Activated CD4-positive, alpha-beta T cell treated with anti-CD3 and anti-CD28 coated beads for 36 hours (primary cell): ENCODE measurements at regions of chr10 and their contacts with region 1.

Region 1: DNA sequence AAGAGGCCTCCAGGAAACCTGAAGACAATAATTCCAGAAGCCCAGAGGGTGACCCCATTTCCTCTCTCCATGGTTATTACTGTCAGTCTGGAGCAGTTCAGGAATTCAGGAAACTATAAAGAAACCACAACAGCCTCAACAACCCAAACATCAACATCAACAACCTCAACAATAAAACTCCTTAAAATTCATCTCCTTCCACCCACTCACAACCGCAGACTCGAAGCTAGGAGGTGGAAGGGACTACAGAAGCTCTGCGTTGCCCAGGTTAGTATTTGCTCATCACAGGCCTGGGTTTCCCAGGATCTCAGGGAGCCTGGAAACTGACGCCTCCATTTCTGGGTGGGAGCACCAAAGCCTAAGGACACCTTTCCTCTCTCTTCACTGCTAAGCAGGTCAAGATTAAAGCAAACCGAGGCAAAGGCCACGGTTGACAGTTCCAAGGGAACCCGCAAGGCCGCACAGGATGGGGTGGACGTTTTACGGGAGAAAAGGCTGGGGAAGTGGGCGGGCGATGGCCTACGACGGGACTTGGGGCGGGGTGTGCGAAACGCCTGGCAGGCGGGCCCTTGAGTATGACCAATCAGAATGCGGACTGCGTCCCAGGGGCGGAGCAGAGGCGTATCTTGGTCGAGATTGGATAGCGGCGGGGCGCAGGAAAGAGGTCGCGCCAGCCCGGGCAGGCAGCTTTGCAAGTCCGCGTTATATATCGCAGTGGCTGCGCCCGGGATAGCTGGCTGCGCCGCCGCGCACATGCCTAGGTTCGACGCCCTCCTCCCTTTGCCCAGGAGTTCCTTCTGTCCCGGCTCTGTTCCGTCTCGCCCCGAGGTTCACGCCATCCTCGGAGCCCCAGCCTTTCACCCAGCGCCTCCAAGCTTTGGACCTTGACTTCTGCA is at the start of gene ELOVL3:
- DNase-seq: peak; percentile 91
- ATAC-seq: peak; percentile 91
- H3K4me3 Mint-ChIP-seq: peak within 1 kb of the TSS; percentile 38
- H3K27ac Mint-ChIP-seq: no peak within 1 kb of the TSS
- H3K4me1 Mint-ChIP-seq: peaks cover 24% of the 10 kb centered on the region
- H3K27me3 Mint-ChIP-seq: peaks cover 39% of the 10 kb centered on the region
- total RNA-seq, gene ELOVL3: 0.14 TPM in 1 of 2 experiments, not detected in the other

Region 2: DNA sequence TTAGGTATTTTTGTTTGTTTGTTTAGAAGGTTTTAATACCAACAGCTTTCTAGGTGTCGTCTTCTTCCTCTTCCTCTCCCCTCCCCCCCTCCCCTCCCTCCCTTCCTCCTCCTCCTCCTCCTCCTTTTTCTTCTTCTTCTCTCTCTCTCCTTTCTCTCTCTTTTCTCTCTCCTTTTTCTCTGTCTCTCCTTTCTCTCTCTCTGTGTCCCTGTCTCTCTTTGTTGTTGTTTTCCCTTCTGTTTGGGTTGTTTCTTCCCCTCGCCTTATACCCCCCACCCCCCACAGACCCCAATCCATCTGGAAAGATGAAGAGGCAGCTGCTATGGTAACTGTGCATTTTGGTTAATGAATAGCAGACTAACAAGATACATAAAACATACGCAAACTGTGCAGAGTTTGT is 796.5 kb before region 1 on chr10:
- CTCF ChIA-PET with region 1: no interaction called
- POLR2A ChIA-PET with region 1: no interaction called
- intact Hi-C with region 1: no loop called
- DNase-seq: no peak
- ATAC-seq: no peak
- H3K4me3 Mint-ChIP-seq: no peak overlapping the region
- H3K27ac Mint-ChIP-seq: no peak overlapping the region
- H3K4me1 Mint-ChIP-seq: peaks cover 4% of the 10 kb centered on the region
- H3K27me3 Mint-ChIP-seq: no peaks in the 10 kb centered on the region

Region 3: GRCh38 chr10:102268375-102268888 is 42.5 kb after region 1 on chr10:
- CTCF ChIA-PET with region 1: interaction called, 82 read pairs
- POLR2A ChIA-PET with region 1: no interaction called
- intact Hi-C with region 1: no loop called
- DNase-seq: no peak
- ATAC-seq: peak; percentile 61
- H3K4me3 Mint-ChIP-seq: peak overlapping the region; percentile 48
- H3K27ac Mint-ChIP-seq: peak overlapping the region; percentile 94
- H3K4me1 Mint-ChIP-seq: peaks cover 57% of the 10 kb centered on the region
- H3K27me3 Mint-ChIP-seq: no peaks in the 10 kb centered on the region

Region 4: GRCh38 chr10:102335184-102335583 is 109.3 kb after region 1 on chr10:
- CTCF ChIA-PET with region 1: interaction called, 12 read pairs
- POLR2A ChIA-PET with region 1: no interaction called
- intact Hi-C with region 1: no loop called
- DNase-seq: no peak
- ATAC-seq: no peak
- H3K4me3 Mint-ChIP-seq: no peak overlapping the region
- H3K27ac Mint-ChIP-seq: no peak overlapping the region
- H3K4me1 Mint-ChIP-seq: peaks cover 19% of the 10 kb centered on the region
- H3K27me3 Mint-ChIP-seq: no peaks in the 10 kb centered on the region

Region 5: DNA sequence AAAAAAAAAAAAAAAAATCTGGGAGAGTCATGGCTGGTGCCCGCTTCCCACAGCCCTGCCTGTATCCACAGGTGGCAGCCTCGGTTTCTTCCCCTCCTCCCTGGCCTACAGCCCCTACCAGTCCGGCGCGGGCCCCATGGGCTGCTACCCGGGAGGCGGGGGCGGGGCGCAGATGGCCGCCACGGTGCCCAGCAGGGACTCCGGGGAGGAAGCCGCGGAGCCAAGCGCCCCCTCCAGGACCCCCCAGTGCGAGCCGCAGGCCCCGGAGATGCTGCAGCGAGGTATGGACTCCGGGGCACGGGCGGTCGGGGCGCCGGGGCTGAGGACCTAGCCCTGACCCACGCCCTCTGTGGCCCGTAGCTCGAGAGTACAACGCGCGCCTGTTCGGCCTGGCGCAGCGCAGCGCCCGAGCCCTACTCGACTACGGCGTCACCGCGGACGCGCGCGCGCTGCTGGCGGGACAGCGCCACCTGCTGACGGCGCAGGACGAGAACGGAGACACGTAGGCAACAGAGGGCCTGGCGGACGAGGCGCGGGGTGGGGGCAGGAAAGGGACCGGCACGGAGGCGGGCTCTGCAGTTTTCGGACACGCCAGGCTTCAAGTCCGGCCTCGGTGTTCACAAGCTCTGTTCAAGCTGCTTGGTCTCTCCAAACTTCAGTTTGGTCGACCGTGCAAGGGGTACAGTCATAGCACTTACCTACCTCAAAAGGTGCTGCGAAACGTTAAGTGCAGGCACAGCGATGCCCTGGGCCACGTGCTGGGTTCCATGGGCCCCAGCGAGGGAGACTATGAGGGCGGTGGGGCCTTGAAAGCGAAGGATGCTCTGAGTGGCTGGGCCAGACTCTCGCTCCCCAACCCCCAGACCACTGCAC is 173.6 kb after region 1 on chr10:
- CTCF ChIA-PET with region 1: interaction called, 39 read pairs
- POLR2A ChIA-PET with region 1: no interaction called
- intact Hi-C with region 1: loop called (anchors 1 to 2 kb)
- DNase-seq: peak; percentile 94
- ATAC-seq: peak; percentile 60
- H3K4me3 Mint-ChIP-seq: peak overlapping the region; percentile 95
- H3K27ac Mint-ChIP-seq: peak overlapping the region; percentile 98
- H3K4me1 Mint-ChIP-seq: peaks cover 41% of the 10 kb centered on the region
- H3K27me3 Mint-ChIP-seq: no peaks in the 10 kb centered on the region

Region 6: DNA sequence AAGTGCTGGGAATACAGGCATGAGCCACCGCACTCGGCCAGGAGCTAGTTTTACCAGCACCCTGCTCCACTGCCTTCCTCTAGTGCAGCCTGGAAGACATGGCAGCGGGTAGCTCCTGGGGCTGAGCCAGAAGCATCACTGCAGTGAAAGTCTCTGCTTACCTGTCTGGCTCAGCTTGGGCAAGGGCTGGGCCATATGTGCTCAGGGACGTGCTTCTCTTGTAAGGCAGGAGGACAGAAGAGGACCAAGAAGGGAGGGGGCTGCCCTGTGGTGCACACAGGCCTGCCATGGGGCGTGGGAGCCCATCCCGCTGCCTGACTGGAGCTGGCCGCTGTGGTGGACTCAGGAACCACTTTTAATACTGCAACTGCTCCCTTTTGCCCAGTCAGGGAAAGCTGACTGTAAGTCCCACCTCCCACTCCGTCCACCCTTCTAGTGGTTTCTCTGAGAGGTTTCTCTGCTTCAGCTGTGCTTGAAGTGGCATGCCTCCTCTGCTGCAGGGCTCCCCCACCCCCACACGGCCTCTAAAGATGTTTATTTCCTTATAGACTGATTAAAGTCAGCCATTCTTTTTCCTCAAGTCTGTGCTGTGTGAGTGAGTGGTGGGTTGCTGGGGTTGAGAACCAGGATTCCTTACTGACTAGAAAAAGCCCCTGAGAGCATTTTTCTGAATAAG is 250.7 kb after region 1 on chr10:
- CTCF ChIA-PET with region 1: interaction called, 17 read pairs
- POLR2A ChIA-PET with region 1: no interaction called
- intact Hi-C with region 1: loop called (anchors 1 to 2 kb)
- DNase-seq: peak; percentile 36
- ATAC-seq: no peak
- H3K4me3 Mint-ChIP-seq: no peak overlapping the region
- H3K27ac Mint-ChIP-seq: peak overlapping the region; percentile 78
- H3K4me1 Mint-ChIP-seq: peaks cover 28% of the 10 kb centered on the region
- H3K27me3 Mint-ChIP-seq: no peaks in the 10 kb centered on the region

Region 7: DNA sequence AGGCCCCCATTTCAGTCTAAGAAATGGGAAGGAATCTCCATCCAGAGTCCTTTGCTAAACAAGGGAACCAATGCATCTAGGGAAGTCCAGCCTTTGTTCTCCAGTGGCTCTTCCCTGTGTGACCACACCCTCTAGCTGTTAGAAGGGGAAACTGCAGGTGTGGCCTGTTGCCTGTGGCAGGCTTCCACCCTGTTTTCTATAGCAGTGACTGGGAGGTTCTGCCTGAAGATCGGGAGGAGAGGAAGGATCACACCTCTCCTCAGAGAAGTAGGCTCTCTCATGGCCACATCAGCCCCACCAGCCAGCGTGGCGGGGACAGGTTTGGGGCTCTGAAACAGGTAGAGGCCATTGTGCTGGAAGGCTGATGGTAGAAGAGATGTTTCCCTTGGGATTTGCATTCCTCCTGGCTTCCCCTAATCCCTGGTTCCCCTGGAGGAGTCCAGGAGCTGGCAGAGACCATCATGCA is 370.6 kb after region 1 on chr10:
- CTCF ChIA-PET with region 1: no interaction called
- POLR2A ChIA-PET with region 1: no interaction called
- intact Hi-C with region 1: no loop called
- DNase-seq: peak; percentile 54
- ATAC-seq: peak; percentile 80
- H3K4me3 Mint-ChIP-seq: no peak overlapping the region
- H3K27ac Mint-ChIP-seq: no peak overlapping the region
- H3K4me1 Mint-ChIP-seq: no peaks in the 10 kb centered on the region
- H3K27me3 Mint-ChIP-seq: no peaks in the 10 kb centered on the region